Right ventricle myocardium inferior (tissue), 1 donor: ENCODE measurements at regions of chr4 and their contacts with region 1.

Region 1: GRCh38 chr4:56799824-56800756 is 21.4 kb downstream of the SPINK2 start:
- DNase-seq: peak; percentile 87
- ATAC-seq: peak; percentile 97

Region 2: DNA sequence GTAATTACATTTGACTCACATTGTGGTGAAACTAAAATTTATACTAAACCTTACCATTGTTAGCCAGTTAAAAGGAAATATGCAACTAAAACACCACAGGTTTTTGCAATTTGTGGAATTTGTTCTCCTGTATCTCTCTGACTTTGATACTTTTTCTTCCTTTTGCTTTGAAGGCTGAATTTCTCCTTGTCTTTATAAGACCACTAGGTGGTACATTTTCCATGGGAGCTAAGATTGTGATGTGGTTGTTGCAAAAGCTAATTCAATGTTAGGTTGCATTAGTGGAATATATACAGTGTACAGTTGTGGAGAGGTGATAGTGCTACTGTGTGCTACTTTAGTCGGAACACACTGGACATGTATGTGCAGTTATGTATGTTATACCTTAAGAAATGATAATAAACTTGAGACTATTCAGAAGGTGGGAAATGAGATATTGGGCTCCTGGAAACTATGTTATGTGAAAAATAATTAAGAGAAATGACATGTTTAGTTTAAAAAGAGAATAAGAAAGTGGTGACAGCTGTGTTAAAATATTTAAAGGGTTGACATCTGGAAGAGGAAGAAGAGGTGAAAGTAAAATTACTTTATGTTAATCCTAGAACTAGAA is 224.2 kb before region 1 on chr4:
- intact Hi-C with region 1: loop called (anchors 2 kb)
- DNase-seq: no peak
- ATAC-seq: no peak

Region 3: GRCh38 chr4:56655209-56655626 is 144.9 kb before region 1 on chr4:
- intact Hi-C with region 1: no loop called
- DNase-seq: no peak
- ATAC-seq: peak; percentile 55

Region 4: GRCh38 chr4:56668298-56668697 is 131.8 kb before region 1 on chr4:
- intact Hi-C with region 1: no loop called
- DNase-seq: no peak
- ATAC-seq: no peak

Region 5: DNA sequence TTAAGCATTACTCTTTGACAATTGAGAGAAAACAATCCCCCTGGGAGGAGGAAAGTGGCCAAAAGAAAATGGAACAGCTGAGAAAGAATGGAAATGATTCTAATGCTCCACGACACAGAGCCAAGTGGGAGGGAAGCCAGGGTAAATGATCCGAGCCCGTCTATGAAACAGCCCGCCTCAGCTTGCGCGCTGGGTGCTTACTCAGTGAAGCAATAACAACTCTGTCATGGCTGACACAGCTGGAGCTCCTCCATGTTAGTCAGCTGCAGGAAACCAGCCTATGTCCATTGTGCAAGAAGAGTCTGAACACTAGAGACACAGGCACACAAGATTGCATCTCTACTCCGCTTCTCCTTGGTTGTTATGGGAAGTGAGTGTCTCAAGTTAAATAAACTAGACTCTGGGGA is 158.0 kb after region 1 on chr4:
- intact Hi-C with region 1: no loop called
- DNase-seq: peak; percentile 88
- ATAC-seq: peak; percentile 97